ENCODE measurements at regions of chr2 and their contacts with region 1.

Region 1: GRCh38 chr2:46451131-46451711 is 28.1 kb upstream of the TMEM247 start:
- DNase-seq: no peak

Region 2: GRCh38 chr2:46002507-46002883 is 448.7 kb before region 1 on chr2:
- in situ Hi-C with region 1: loop called (anchors 10 kb)
- DNase-seq: no peak